Activated T-helper 1 cell treated with anti-CD3 and anti-CD28 coated beads, Interleukin-12 subunit alpha, Interleukin-12 subunit beta, Interleukin-2, Interleukin-4 antibody, amounts not matched to agents 30 ng/mL and 10 ng/mL and 1 ng/mL, durations not matched to agents 14 hours and 24 hours and 36 hours (primary cell): ENCODE measurements at regions of chr10 and their contacts with region 1.

Region 1: DNA sequence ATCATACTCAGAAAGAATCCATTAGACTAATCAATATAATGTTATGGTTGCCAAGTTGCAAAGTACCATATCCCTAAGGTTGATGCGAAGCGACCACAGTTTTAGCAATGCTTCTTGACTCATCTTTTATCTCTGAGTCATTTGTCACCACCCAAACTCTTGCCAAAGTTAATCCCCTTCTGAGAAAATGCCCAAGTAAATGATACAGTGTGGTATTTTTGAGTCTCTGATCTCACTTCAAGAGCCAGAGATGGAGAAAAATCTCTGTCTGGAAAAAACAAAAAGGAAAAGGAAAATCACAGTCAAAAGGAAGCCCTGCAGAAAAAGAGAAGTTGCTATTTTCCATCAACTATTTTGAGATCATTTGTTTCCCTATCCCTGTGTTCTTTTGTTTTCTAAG is 26.7 kb upstream of the OTUD1 start:
- DNase-seq: no peak
- H3K4me3 Mint-ChIP-seq: no peak overlapping the region
- H3K27ac Mint-ChIP-seq: peak overlapping the region; percentile 80
- H3K4me1 Mint-ChIP-seq: peaks cover 22% of the 10 kb centered on the region
- H3K27me3 Mint-ChIP-seq: no peaks in the 10 kb centered on the region

Region 2: GRCh38 chr10:23331567-23332290 is 80.5 kb before region 1 on chr10:
- intact Hi-C with region 1: loop called (anchors 1 kb)
- DNase-seq: no peak
- H3K4me3 Mint-ChIP-seq: no peak overlapping the region
- H3K27ac Mint-ChIP-seq: peak overlapping the region; percentile 1
- H3K4me1 Mint-ChIP-seq: peaks cover 20% of the 10 kb centered on the region
- H3K27me3 Mint-ChIP-seq: no peaks in the 10 kb centered on the region

Region 3: DNA sequence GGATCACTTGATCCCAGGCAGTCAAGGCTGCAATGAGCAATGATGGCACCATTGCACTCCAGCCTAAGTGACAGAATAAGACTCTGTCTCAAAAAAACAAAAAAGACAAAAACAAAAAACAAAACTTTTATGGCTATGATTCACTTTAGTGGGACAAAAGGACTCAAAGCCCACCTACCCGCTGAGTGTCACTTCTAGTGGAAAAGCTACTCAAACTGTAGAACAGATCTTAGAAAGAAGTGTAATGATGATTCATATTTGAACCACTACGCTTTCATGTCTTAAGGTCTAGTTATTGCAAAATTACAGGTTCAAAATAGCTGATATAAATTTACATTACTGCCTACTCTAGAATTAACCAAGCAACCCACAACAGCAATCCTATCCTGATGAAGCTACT is 20.4 kb before region 1 on chr10:
- intact Hi-C with region 1: loop called (anchors 1 kb)
- DNase-seq: no peak
- H3K4me3 Mint-ChIP-seq: no peak overlapping the region
- H3K27ac Mint-ChIP-seq: peak overlapping the region; percentile 16
- H3K4me1 Mint-ChIP-seq: peaks cover 9% of the 10 kb centered on the region
- H3K27me3 Mint-ChIP-seq: no peaks in the 10 kb centered on the region